ENCODE measurements at regions of chr11 and their contacts with region 1.

Region 1: GRCh38 chr11:9384535-9385303 is at the start of gene IPO7:
- DNase-seq: peak; percentile 90 to 95
- ATAC-seq: peak; percentile 97 to 98
- H3K4me3 ChIP-seq: peak within 1 kb of the TSS; percentile 74
- H3K27ac ChIP-seq: peak within 1 kb of the TSS; percentile 88 to 97
- H3K4me1 ChIP-seq: peaks cover 19% of the 10 kb centered on the region; the same call in 2 of the 3 replicates
- CTCF ChIP-seq: peak; percentile 29; the same call in 2 of the 3 replicates
- EP300 ChIP-seq: no peak
- POLR2A ChIP-seq: peak; percentile 87
- RAD21 ChIP-seq: peak; percentile 20; a peak in 2 of 5 replicates
- polyA plus RNA-seq, gene IPO7: 142 and 160 TPM in 2 replicates

Region 2: DNA sequence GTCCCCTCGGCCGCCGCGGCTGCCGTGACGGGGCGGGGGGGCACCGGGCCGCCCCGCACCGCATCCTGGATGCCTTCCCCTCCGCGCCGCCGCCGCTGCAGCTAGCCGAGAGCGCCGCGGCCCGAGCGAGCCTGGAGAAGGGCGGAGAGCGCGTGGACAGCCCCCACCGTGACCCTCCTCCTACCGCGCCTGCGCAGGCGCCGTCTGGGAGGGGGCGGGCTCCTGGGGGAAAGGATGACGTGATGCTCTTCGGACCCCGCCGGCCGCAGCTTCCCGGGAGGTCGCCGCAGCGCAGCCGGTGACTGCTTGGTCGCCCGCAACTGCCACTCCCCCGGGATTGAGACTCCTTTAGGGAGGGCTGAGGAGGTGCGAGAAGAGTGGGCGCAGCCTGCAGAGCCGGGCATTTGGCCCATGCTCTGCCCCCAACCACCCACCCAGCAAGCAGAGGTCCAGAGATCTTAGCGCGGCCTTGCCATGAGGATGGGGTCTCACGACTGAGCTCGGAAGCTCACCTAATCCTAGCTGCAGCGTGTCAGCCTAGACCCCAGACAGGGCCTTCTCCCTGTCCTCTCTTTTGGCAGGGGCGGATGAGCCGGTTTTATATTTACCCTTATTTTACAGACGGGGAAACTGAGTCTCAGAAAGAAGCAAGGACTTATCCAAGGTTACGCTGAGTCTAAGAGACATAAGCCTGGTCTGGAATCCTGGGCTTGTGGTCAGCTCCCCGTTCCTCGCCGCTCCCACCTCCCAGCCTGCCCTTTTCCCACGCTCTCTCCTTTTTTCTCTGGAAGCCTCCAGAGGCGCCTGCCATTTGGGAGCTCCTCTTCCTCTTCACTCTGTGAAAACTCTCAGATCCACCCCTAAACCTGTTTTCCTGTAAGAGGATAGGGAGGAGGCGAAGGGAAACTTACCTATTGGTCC is 119.2 kb before region 1 on chr11 and contains the start of gene DENND5A:
- CTCF ChIA-PET with region 1: interaction called, 5 read pairs
- POLR2A ChIA-PET with region 1: interaction called, 10 read pairs
- DNase-seq: peak; percentile 86 to 98
- ATAC-seq: peak; percentile 88 to 91
- H3K4me3 ChIP-seq: peak within 1 kb of the TSS; percentile 76
- H3K27ac ChIP-seq: peak within 1 kb of the TSS; percentile 91 to 96
- H3K4me1 ChIP-seq: peaks cover 29% of the 10 kb centered on the region
- CTCF ChIP-seq: no peak
- EP300 ChIP-seq: no peak
- POLR2A ChIP-seq: peak; percentile 76
- RAD21 ChIP-seq: no peak
- polyA plus RNA-seq, gene DENND5A: 88.7 and 120 TPM in 2 replicates

Region 3: DNA sequence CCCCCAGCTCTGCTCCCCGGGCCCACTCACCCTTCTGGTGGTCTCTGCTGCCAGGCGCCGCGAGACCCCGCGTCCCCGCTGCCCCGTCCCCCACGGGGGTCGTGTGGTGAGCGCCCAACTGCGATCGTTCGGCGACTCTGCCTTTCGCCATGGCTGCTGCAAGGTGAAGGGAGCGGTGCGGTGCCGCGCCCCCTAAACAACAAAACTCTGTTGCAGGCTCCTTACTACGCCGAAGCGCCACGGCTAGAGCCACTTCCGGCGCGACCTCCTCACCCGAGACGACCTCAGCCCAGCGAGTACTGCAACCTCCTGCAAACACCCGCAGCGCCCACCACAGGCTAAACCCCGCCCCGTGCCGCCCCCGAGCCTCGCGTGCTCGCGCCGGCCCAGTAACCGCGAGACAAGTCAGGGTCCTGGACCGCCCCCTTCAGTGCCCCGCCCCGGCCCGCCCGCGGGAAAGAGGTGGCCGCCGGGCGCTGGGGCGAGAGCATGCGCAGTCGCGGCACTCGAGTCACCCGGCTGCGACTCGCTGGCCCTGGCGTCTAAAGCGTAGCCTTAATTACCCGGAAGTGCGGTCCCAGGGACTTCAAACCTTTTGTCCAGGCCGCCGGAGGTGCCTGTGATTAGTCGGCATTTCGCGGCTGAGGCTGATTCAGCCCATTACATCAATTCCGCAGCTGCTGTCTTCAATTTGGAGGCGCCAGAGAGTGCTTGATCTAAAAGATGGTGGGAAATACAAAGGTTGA is 70.3 kb before region 1 on chr11 and contains the start of gene TMEM41B:
- CTCF ChIA-PET with region 1: interaction called, 9 read pairs
- POLR2A ChIA-PET with region 1: interaction called, 10 read pairs
- DNase-seq: peak; percentile 99
- ATAC-seq: peak; percentile 93 to 97
- H3K4me3 ChIP-seq: peak within 1 kb of the TSS; percentile 78
- H3K27ac ChIP-seq: peak within 1 kb of the TSS; percentile 93 to 96
- H3K4me1 ChIP-seq: peaks cover 38% of the 10 kb centered on the region
- CTCF ChIP-seq: no peak
- EP300 ChIP-seq: no peak
- POLR2A ChIP-seq: peak; percentile 84
- RAD21 ChIP-seq: peak in 1 of 2 experiments; percentile 11; a peak in 1 of 5 replicates
- polyA plus RNA-seq, gene TMEM41B: 57.7 and 71.4 TPM in 2 replicates

Region 4: DNA sequence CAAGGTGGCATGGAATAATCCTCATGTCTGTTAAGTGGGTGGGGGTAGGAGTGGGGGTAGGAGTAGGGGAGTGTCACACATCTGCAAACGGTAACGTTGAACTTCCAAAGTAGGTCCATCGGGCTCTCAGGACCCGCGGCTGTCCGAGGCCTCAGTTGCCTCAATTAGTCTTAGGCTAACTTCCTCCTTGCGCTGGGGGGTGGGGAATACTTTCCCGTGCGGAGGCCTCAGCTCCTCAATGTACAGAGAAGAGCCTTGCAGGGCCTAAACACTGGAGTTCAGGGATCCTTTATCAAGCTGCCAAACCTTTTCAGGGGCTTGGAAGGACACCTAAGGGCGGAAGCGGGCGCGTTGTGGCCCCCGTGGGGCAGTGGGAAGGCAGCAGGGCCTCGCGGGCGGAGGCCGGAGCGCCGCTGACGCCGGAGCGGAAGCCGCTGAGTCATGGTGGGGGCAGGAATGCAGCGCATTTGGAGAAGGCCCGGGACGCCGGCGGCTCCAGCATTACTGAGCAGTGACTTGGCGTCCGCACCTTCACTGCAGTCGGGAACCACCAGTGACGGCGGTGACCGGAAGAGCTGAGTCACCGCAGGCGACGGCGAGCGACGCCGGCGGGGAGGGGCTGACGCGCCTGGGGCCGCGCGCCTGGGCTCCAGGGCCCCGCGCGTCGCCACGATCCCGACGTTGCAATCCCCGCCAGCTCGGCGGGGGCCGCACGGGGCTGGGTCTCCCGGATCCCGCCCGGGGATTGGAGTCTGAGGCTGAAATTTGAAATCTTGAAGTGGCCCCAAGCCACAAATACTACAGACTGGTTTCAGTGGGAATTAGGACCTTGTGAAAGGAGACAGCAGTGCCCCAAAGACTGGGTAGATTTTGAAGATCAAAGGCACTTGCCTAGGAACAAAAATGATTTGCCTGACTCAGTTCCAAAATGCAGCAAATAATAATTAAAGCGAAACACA is 20.5 kb before region 1 on chr11:
- CTCF ChIA-PET with region 1: interaction called, 6 read pairs
- POLR2A ChIA-PET with region 1: interaction called, 12 read pairs
- DNase-seq: peak; percentile 92 to 99
- ATAC-seq: peak; percentile 98 to 99
- H3K4me3 ChIP-seq: 0 out of 3 replicates have a peak overlapping the region, but pooled peaks have one; percentile 6
- H3K27ac ChIP-seq: peak overlapping the region; percentile 99 to 100
- H3K4me1 ChIP-seq: peaks cover 36% of the 10 kb centered on the region
- CTCF ChIP-seq: no peak
- EP300 ChIP-seq: peak; percentile 64 to 87; a peak in 3 of 5 replicates
- POLR2A ChIP-seq: peak; percentile 45
- RAD21 ChIP-seq: peak; percentile 24 to 43; a peak in 2 of 5 replicates

Region 5: DNA sequence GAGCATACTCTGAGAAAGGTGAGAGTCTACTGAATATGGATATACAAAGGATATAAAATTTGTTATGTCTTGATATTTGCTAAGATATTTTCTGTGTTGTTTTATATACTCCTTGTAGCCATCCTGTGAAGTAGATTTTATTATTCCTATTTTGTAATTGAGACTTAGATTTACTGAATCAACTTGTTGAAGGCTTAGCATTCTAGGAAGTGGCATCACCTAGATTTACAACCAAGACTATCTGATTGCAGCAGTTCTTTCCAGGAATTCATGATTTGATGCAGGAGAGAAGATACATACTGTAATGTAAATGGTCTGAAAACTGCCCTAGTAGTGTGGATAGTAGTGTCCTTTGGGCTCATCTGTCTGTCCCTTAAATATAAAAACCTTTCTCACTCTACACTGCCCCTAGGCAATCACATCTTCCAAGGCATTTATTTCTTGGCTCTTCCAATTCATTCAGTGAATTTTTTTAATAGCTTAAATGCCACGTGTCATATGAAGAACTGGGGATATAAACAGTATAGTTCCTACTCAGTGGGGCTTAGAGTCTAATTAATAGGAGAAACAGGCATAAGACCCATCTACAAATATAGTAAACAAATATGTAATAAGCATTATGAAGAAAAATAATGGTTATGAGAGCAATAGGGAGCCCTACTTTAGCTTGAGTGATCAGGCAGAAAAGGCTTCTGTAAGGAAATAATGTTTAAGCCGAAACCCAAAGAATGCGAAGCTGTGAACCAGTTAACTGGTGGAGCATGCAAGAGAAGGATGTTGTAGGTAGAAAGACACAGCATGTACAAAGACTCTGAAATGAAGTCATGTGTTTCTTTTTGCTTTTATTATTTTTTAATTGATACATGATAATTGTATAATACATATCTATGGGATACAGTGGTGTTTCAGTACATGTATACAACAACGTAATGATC is 13.3 kb after region 1 on chr11:
- CTCF ChIA-PET with region 1: interaction called, 12 read pairs
- POLR2A ChIA-PET with region 1: no interaction called
- DNase-seq: no peak
- ATAC-seq: peak in 1 of 2 experiments; percentile 26; a peak in 3 of 6 replicates
- H3K4me3 ChIP-seq: no peak overlapping the region
- H3K27ac ChIP-seq: no peak overlapping the region
- H3K4me1 ChIP-seq: peaks cover 26% of the 10 kb centered on the region
- CTCF ChIP-seq: no peak
- EP300 ChIP-seq: no peak
- POLR2A ChIP-seq: no peak
- RAD21 ChIP-seq: no peak

Region 6: DNA sequence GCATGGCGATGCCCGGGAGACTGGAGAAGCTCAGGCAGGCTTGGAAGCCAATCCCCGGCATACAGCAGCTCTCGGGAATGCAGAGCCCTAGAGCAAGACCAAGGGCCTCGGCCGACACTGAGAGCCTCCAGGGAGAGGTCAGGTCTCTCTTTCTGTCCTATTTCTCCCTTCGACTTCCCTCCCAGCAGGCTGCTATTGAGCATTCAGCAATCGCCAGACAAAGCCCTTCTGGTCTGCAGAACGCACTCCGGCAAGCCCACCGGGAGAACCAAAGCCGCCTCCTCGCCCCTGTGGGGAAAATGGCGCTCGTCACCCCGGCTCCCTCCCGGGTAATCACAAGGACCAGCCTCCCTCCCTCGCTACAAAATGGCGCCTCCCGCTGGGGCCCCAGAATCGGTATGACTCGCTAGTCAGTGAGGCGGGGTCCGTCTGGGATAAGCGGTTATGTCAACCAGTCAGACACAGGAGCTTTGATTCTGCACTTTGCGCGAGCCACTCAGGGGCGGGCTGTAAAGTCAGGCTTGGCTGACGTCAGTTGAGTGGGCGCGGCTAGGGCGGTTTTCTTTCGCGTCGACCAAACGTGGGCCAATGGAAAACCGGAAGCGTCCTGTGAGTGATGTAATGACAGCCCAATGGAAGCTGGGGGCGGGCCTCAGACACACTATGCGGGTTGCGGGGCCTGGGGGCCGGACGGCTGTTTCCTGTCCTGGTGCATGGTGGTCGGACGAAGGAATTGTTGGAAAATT is 75.8 kb after region 1 on chr11 and contains the start of gene ZNF143:
- CTCF ChIA-PET with region 1: interaction called, 3 read pairs
- POLR2A ChIA-PET with region 1: interaction called, 27 read pairs
- DNase-seq: peak; percentile 97 to 100
- ATAC-seq: peak; percentile 92 to 93
- H3K4me3 ChIP-seq: peak within 1 kb of the TSS; percentile 83
- H3K27ac ChIP-seq: peak within 1 kb of the TSS; percentile 99
- H3K4me1 ChIP-seq: peaks cover 20% of the 10 kb centered on the region
- CTCF ChIP-seq: no peak
- EP300 ChIP-seq: no peak
- POLR2A ChIP-seq: peak; percentile 80
- RAD21 ChIP-seq: no peak
- polyA plus RNA-seq, gene ZNF143: 37.7 and 38.4 TPM in 2 replicates

Measured in A549 (cell line).